CD14-positive monocyte (primary cell): ENCODE measurements at regions of chr14 and their contacts with region 1.

Region 1: GRCh38 chr14:21103710-21104447 is 3.0 kb downstream of the TMEM253 start:
- DNase-seq: peak; percentile 95 to 97 (median 96)
- H3K4me3 ChIP-seq: peak overlapping the region; percentile 43 to 84 (median 66)
- H3K4me3 Mint-ChIP-seq: peak overlapping the region; percentile 81 to 85
- H3K27ac ChIP-seq: peak overlapping the region; percentile 95 to 98
- H3K27ac Mint-ChIP-seq: peak overlapping the region; percentile 97 to 99 (median 98)
- H3K4me1 ChIP-seq: peaks cover 46 to 49% of the 10 kb centered on the region in 2 donors
- H3K4me1 Mint-ChIP-seq: peaks cover 46% of the 10 kb centered on the region
- H3K27me3 ChIP-seq: peaks cover 0 to 1% of the 10 kb centered on the region in 2 donors
- H3K27me3 Mint-ChIP-seq: peaks cover 0 to 10% (median 7%) of the 10 kb centered on the region in 3 donors
- CTCF ChIP-seq: peak; percentile 65

Region 2: GRCh38 chr14:20461274-20462001 is 642.4 kb before region 1 on chr14 and contains the start of gene PIP4P1:
- intact Hi-C with region 1: loop called in 1 of 2 experiments (anchors 10 kb)
- DNase-seq: peak; percentile 100
- H3K4me3 ChIP-seq: peak within 1 kb of the TSS; percentile 71 to 86 (median 73)
- H3K4me3 Mint-ChIP-seq: peak within 1 kb of the TSS; percentile 93 to 96
- H3K27ac ChIP-seq: peak within 1 kb of the TSS; percentile 77 to 93
- H3K27ac Mint-ChIP-seq: peak within 1 kb of the TSS; percentile 92 to 98 (median 97)
- H3K4me1 ChIP-seq: peaks cover 47 to 54% of the 10 kb centered on the region in 2 donors
- H3K4me1 Mint-ChIP-seq: peaks cover 13% of the 10 kb centered on the region
- H3K27me3 ChIP-seq: no peaks in the 10 kb centered on the region
- H3K27me3 Mint-ChIP-seq: peaks cover 1 to 5% (median 1%) of the 10 kb centered on the region in 3 donors
- CTCF ChIP-seq: no peak
- polyA plus RNA-seq, gene PIP4P1: 19.4 to 106 (median 21.2) TPM

Region 3: GRCh38 chr14:21014761-21015190 is 89.1 kb before region 1 on chr14:
- intact Hi-C with region 1: loop called (anchors 5 kb)
- DNase-seq: peak; percentile 71 to 85 (median 77)
- H3K4me3 ChIP-seq: no peak overlapping the region
- H3K4me3 Mint-ChIP-seq: no peak overlapping the region
- H3K27ac ChIP-seq: no peak overlapping the region
- H3K27ac Mint-ChIP-seq: peak overlapping the region in 4 of 7 donors; percentile 43 to 89 (median 62)
- H3K4me1 ChIP-seq: peaks cover 48 to 52% of the 10 kb centered on the region in 2 donors
- H3K4me1 Mint-ChIP-seq: peaks cover 49% of the 10 kb centered on the region
- H3K27me3 ChIP-seq: peaks cover 0 to 5% of the 10 kb centered on the region in 2 donors
- H3K27me3 Mint-ChIP-seq: peaks cover 14 to 19% (median 18%) of the 10 kb centered on the region in 3 donors
- CTCF ChIP-seq: peak; percentile 92

Region 4: GRCh38 chr14:21071225-21072030 is 32.5 kb before region 1 on chr14:
- intact Hi-C with region 1: loop called (anchors 2 to 5 kb)
- DNase-seq: peak; percentile 89 to 91 (median 89)
- H3K4me3 ChIP-seq: peak overlapping the region; percentile 66 to 95 (median 83)
- H3K4me3 Mint-ChIP-seq: peak overlapping the region; percentile 91 to 94
- H3K27ac ChIP-seq: peak overlapping the region; percentile 90 to 94
- H3K27ac Mint-ChIP-seq: peak overlapping the region; percentile 92 to 99 (median 98)
- H3K4me1 ChIP-seq: peaks cover 40 to 45% of the 10 kb centered on the region in 2 donors
- H3K4me1 Mint-ChIP-seq: peaks cover 46% of the 10 kb centered on the region
- H3K27me3 ChIP-seq: peaks cover 0 to 11% of the 10 kb centered on the region in 2 donors
- H3K27me3 Mint-ChIP-seq: peaks cover 11 to 15% (median 14%) of the 10 kb centered on the region in 3 donors
- CTCF ChIP-seq: no peak

Region 5: GRCh38 chr14:21092273-21093011 is 11.4 kb before region 1 on chr14:
- intact Hi-C with region 1: loop called in 1 of 2 experiments (anchors 2 kb)
- DNase-seq: peak; percentile 75 to 85 (median 81)
- H3K4me3 ChIP-seq: no peak overlapping the region
- H3K4me3 Mint-ChIP-seq: no peak overlapping the region
- H3K27ac ChIP-seq: no peak overlapping the region
- H3K27ac Mint-ChIP-seq: peak overlapping the region in 2 of 7 donors; percentile 15 to 84
- H3K4me1 ChIP-seq: peaks cover 9 to 20% of the 10 kb centered on the region in 2 donors
- H3K4me1 Mint-ChIP-seq: peaks cover 21% of the 10 kb centered on the region
- H3K27me3 ChIP-seq: no peaks in the 10 kb centered on the region
- H3K27me3 Mint-ChIP-seq: peaks cover 3 to 5% (median 3%) of the 10 kb centered on the region in 3 donors
- CTCF ChIP-seq: peak; percentile 100

Region 6: GRCh38 chr14:21269252-21270046 is 165.6 kb after region 1 on chr14 and contains the start of gene HNRNPC:
- intact Hi-C with region 1: loop called in 1 of 2 experiments (anchors 5 kb)
- DNase-seq: peak; percentile 99 to 100 (median 99)
- H3K4me3 ChIP-seq: peak within 1 kb of the TSS; percentile 95 to 98 (median 97)
- H3K4me3 Mint-ChIP-seq: peak within 1 kb of the TSS; percentile 100
- H3K27ac ChIP-seq: peak within 1 kb of the TSS; percentile 94 to 99
- H3K27ac Mint-ChIP-seq: peak within 1 kb of the TSS; percentile 100
- H3K4me1 ChIP-seq: peaks cover 45 to 55% of the 10 kb centered on the region in 2 donors
- H3K4me1 Mint-ChIP-seq: peaks cover 44% of the 10 kb centered on the region
- H3K27me3 ChIP-seq: no peaks in the 10 kb centered on the region
- H3K27me3 Mint-ChIP-seq: peaks cover 0 to 3% (median 0%) of the 10 kb centered on the region in 3 donors
- CTCF ChIP-seq: no peak
- polyA plus RNA-seq, gene HNRNPC: 391 to 609 (median 580) TPM